ENCODE measurements at regions of chr3 and their contacts with region 1.

Region 1: DNA sequence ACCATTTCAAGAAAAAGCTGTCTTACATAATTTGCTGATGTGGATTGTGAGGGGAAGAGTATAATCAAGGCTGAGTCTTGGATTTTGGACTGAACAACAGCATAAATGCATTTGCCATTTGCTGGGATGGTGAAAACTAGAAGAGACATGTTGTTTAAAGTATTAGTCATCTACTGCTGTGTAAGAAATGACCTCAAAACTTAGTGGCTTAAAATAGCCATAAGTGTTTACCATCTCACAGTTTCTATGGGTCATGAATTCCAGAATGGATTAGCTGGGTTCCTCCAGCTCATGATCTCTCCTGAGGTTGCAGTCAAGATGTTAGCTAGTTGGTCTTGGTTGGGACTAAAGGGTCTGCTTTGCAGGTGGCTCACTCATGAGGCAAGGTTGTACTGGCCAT is 66.2 kb downstream of the SCN11A start:
- DNase-seq: peak; percentile 35
- H3K4me3 ChIP-seq: no peak overlapping the region
- H3K27me3 ChIP-seq: no peaks in the 10 kb centered on the region
- CTCF ChIP-seq: no peak

Region 2: DNA sequence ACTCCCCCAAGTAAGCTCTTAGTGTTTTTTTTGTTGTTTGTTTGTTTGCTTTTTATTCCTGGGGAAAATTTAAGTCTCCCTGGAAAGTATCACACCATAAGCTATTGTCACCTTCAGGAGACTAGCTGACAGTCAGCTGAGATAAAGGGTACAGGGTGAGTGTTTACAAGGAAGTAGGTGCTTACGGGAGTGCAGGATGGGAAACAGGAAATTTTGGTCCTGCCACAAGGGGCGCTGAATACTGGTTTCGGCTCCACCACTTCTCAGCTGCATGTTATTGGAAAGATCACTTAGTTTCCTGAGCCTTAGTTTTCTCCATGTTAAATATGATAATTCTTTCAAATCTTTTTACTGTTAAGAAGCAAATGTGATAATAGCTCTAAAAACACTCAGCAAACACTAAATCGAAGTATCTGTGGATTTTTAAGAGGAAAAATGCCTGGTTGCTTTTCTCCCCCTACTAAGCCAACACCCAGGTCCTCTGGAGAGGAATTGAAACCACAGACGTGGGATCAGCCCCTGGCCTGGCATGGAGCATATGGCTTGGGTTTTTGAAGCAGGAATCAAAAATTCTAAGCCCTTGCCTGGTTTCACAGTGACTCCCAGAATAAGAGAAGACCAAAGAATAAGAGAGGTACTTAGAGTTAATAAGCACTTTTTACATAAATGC is 24.5 kb before region 1 on chr3:
- CTCF ChIA-PET with region 1: interaction called, 10 read pairs
- POLR2A ChIA-PET with region 1: no interaction called
- DNase-seq: peak; percentile 6
- H3K4me3 ChIP-seq: no peak overlapping the region
- H3K27me3 ChIP-seq: no peaks in the 10 kb centered on the region; the same call in 1 of the 2 replicates
- CTCF ChIP-seq: peak; percentile 81